ENCODE measurements at regions of chr17 and their contacts with region 1.

Region 1: DNA sequence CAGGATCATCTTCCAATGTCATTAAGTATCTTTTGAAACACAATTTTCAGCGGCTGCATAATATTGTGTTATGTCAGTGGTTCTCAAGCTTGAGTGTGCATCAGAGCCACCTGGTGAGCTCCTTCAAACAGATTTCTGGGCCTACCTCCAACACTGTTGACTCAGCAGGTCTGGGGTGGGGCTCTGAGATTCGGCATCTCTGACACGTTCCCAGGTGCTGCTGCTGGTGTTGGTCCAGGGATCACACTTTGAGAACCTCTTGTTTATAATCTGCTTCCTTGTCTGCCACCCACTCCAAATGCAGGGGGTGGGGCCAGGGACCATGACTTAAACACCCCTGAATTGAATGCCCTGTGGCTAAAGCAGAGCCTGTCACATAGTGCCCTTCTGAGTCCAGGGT is 73.8 kb upstream of the HNF1B start:
- DNase-seq: peak in 1 of 2 experiments; percentile 59
- ATAC-seq: peak; percentile 22 to 61; a peak in 5 of 6 replicates
- H3K4me3 ChIP-seq: no peak overlapping the region
- H3K27ac ChIP-seq: peak overlapping the region; percentile 41 to 86; a peak in 5 of 6 replicates
- H3K4me1 ChIP-seq: peaks cover 66% of the 10 kb centered on the region
- CTCF ChIP-seq: no peak
- EP300 ChIP-seq: no peak
- POLR2A ChIP-seq: no peak
- RAD21 ChIP-seq: no peak

Region 2: GRCh38 chr17:37609170-37610040 is 209.3 kb before region 1 on chr17 and contains the start of gene SYNRG:
- CTCF ChIA-PET with region 1: interaction called, 16 read pairs
- POLR2A ChIA-PET with region 1: interaction called, 9 read pairs
- DNase-seq: peak; percentile 98 to 99
- ATAC-seq: peak; percentile 97
- H3K4me3 ChIP-seq: peak within 1 kb of the TSS; percentile 72
- H3K27ac ChIP-seq: peak within 1 kb of the TSS; percentile 86 to 93
- H3K4me1 ChIP-seq: peaks cover 20% of the 10 kb centered on the region; the same call in 1 of the 3 replicates
- CTCF ChIP-seq: peak; percentile 33; the same call in 1 of the 3 replicates
- EP300 ChIP-seq: peak in 1 of 2 experiments; percentile 20; a peak in 1 of 5 replicates
- POLR2A ChIP-seq: peak; percentile 90
- RAD21 ChIP-seq: peak; percentile 36 to 52
- polyA plus RNA-seq, gene SYNRG: 17.4 and 24.8 TPM in 2 replicates

Region 3: DNA sequence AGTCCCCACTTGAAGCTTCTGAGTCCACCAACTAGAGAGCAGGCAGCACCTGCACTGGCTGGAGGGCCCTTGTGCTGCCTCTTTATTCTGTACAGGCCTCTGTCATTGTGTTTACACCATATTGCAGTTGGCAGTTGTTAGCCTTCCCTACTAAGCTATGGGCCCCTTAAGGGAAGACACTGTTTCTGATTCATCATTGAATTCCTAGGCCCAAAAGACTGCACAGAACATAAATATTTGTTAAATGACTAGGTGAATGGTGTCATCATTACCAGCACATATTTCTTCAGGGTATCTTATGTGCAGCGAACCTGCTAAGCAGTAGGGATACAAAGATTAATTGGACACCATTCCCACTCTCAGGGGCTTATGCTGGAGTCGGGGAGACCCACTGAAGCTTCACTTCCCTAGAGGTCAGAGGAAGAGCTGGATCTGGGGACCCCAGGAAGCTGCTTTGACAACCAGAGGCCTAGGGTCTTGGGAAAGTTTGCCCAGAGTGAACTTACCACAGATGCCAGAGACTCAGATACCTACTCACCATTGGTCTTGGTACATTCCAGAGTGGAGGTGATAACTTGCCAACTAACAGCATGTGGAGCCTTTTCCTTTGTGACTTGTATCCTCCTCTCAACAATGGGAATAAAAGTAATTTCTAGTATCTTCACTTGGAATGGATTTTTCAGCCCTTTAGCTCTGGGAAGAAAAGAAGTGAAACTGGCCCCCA is 146.7 kb before region 1 on chr17:
- CTCF ChIA-PET with region 1: interaction called, 11 read pairs
- POLR2A ChIA-PET with region 1: no interaction called
- DNase-seq: peak; percentile 77 to 83
- ATAC-seq: peak; percentile 90 to 91
- H3K4me3 ChIP-seq: no peak overlapping the region
- H3K27ac ChIP-seq: peak overlapping the region; percentile 72 to 85
- H3K4me1 ChIP-seq: peaks cover 24% of the 10 kb centered on the region
- CTCF ChIP-seq: no peak
- EP300 ChIP-seq: 0 out of 5 replicates have a peak, but pooled peaks of 1 of the 2 experiments have one; percentile 40
- POLR2A ChIP-seq: no peak
- RAD21 ChIP-seq: no peak

Region 4: GRCh38 chr17:37710344-37710886 is 108.3 kb before region 1 on chr17:
- CTCF ChIA-PET with region 1: interaction called, 82 read pairs
- POLR2A ChIA-PET with region 1: no interaction called
- DNase-seq: peak; percentile 72 to 87
- ATAC-seq: peak in 1 of 2 experiments; percentile 33; a peak in 3 of 6 replicates
- H3K4me3 ChIP-seq: no peak overlapping the region
- H3K27ac ChIP-seq: peak overlapping the region; percentile 89 to 95; a peak in 4 of 6 replicates
- H3K4me1 ChIP-seq: peaks cover 88% of the 10 kb centered on the region
- CTCF ChIP-seq: no peak
- EP300 ChIP-seq: no peak
- POLR2A ChIP-seq: no peak
- RAD21 ChIP-seq: no peak

Region 5: DNA sequence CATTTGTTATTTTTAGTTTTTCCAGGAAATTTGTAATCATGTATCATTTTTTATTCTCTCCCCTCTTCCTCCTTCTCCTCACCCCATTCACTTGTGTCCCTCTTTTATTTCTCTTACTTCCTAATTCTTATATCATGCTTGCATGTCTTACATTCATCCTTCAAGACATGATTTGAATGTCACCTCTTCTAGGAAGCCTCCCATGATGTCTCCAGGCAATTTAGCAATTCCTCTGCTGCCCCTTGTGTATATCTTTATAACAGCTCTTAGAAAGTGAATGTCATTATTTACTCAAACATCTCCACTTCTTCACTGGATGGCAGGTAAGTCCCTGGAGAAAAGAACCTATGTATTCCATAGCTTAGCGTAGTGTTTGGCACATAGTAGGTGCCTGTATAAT is 81.6 kb before region 1 on chr17:
- CTCF ChIA-PET with region 1: interaction called, 31 read pairs
- POLR2A ChIA-PET with region 1: no interaction called
- DNase-seq: peak; percentile 41 to 73
- ATAC-seq: peak; percentile 38 to 52; a peak in 3 of 6 replicates
- H3K4me3 ChIP-seq: no peak overlapping the region
- H3K27ac ChIP-seq: peak overlapping the region in 1 of 2 experiments; percentile 37; a peak in 2 of 6 replicates
- H3K4me1 ChIP-seq: peaks cover 44% of the 10 kb centered on the region
- CTCF ChIP-seq: peak; percentile 65
- EP300 ChIP-seq: no peak
- POLR2A ChIP-seq: no peak
- RAD21 ChIP-seq: peak; percentile 63 to 73

Region 6: GRCh38 chr17:37770631-37771518 is 47.8 kb before region 1 on chr17:
- CTCF ChIA-PET with region 1: interaction called, 80 read pairs
- POLR2A ChIA-PET with region 1: no interaction called
- DNase-seq: peak; percentile 79 to 82
- ATAC-seq: peak; percentile 89 to 92
- H3K4me3 ChIP-seq: no peak overlapping the region
- H3K27ac ChIP-seq: peak overlapping the region; percentile 32 to 56; a peak in 5 of 6 replicates
- H3K4me1 ChIP-seq: peaks cover 4% of the 10 kb centered on the region; the same call in 2 of the 3 replicates
- CTCF ChIP-seq: peak; percentile 87
- EP300 ChIP-seq: no peak
- POLR2A ChIP-seq: no peak
- RAD21 ChIP-seq: peak; percentile 93 to 97

Region 7: GRCh38 chr17:37833237-37833859 is 14.7 kb after region 1 on chr17:
- CTCF ChIA-PET with region 1: interaction called, 31 read pairs
- POLR2A ChIA-PET with region 1: no interaction called
- DNase-seq: no peak
- ATAC-seq: no peak
- H3K4me3 ChIP-seq: no peak overlapping the region
- H3K27ac ChIP-seq: no peak overlapping the region
- H3K4me1 ChIP-seq: peaks cover 9% of the 10 kb centered on the region
- CTCF ChIP-seq: no peak
- EP300 ChIP-seq: no peak
- POLR2A ChIP-seq: no peak
- RAD21 ChIP-seq: no peak

Region 8: GRCh38 chr17:37888881-37889280 is 70.2 kb after region 1 on chr17:
- CTCF ChIA-PET with region 1: no interaction called
- POLR2A ChIA-PET with region 1: no interaction called
- DNase-seq: no peak
- ATAC-seq: no peak
- H3K4me3 ChIP-seq: no peak overlapping the region
- H3K27ac ChIP-seq: no peak overlapping the region
- H3K4me1 ChIP-seq: no peaks in the 10 kb centered on the region
- CTCF ChIP-seq: no peak
- EP300 ChIP-seq: no peak
- POLR2A ChIP-seq: no peak
- RAD21 ChIP-seq: no peak

Measured in A549 (cell line).